ENCODE measurements at regions of chr7 and their contacts with region 1.

Region 1: DNA sequence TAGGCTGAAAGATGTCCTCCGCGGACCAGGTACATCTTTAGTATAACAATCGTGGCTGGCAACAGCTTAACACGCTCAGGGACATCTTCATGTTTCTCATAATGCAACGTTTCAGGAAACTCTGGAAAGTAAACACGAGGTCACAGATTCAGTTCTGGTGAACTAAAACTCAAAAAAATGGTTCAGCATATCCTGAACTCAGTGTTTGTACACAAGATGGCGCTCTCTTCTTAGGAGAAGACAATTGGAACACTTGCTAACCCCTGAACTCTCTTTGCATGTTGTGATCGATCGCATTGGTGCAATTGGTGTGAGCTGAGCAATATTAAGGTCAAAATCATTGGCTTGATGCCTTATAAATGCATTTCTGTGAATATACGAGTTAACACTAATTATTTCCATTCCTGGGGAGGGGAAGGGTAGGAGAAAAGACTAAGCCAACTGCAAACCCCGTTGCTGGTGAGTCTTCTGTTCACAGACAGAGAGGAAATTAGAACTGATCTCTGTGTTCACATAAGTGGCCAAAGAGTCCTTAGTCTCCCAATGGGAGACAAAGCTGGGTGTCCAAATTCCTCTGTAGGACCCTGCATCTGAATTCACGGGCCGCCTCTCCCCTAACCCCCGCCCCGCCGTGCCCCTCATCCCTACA is 52.6 kb upstream of the FAM180A start:
- DNase-seq: no peak
- ATAC-seq: peak; percentile 61

Region 2: DNA sequence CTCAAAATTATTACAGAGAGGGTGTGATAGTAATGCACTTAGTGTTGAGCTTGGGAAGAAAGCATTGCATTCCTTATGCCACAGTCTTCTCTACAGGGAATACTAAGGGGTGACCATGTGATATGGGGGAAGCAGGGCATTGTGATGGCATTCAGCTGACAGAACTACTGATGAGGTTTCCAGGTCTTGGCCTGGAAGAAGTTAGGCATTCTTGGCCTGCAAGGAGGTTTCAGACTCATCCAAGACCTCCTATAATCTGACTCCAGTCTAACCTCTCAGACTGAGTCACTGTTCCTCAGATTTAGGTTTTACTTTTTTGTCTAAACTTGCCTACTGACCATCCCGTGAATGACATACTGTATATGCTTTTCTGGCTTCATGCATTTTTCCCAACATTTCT is 131.0 kb before region 1 on chr7:
- intact Hi-C with region 1: no loop called
- DNase-seq: no peak
- ATAC-seq: peak; percentile 14

Region 3: DNA sequence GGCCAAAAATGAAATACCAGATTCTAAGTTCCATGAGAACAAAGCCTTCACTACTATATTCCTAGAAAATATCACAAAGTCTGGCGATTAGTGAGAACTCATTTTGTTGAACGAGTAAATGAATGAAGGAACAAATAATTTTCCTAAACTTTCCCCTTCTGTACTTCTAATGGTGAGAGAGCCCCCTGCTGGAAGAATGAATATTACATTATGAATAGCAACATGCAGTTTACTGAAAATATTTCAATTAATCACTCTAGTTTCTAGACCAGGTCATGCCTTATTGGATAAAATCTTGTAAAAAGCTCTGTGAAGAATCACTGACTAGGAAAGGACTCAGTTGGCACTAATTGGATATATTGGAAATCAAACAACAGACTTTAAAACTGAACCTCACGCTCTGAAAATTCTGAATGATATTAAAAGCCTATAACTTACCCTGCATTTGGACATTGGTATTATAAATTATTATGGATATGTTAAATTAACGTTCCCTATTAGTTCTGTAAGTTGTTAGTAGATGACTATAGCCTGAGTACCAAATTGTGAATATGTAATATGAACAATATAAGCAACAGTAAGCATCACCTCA is 208.4 kb after region 1 on chr7:
- intact Hi-C with region 1: loop called (anchors 1 kb)
- DNase-seq: no peak
- ATAC-seq: no peak

Region 4: DNA sequence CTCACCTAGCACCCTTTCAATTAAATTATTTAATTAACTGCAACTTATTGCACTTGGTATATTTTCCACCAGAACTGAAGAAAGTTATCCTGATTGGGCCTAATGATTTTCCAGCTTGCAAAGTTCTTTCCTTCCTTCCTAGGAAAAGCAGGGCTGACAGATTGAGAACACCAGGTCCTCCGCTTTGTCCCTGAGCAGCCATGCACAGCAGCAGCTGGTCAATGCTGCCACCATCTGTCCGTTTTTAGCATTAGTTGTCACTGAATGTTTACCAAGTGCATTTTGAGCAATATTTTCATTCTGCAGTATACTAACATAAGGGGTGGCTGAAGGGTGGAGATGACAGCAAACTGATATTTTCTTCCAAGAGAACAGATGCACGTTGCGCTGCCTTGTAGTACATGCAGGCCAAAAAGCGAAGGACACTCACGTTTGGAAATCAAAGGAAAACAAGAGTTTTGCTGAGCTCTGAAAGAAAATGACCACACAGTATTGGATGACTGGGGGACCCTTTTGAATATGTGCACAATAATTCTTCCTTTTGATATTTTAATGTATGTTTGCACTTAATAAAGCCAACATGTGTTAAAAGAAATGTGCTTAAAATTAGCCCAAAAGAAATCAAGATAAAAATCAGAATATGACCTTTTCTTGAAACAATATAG is 1791.2 kb after region 1 on chr7:
- intact Hi-C with region 1: loop called (anchors 5 kb)
- DNase-seq: no peak
- ATAC-seq: peak; percentile 93